Activated naive CD4-positive, alpha-beta T cell treated with anti-CD3 and anti-CD28 coated beads for 36 hours (primary cell): ENCODE measurements at regions of chr12 and their contacts with region 1.

Region 1: DNA sequence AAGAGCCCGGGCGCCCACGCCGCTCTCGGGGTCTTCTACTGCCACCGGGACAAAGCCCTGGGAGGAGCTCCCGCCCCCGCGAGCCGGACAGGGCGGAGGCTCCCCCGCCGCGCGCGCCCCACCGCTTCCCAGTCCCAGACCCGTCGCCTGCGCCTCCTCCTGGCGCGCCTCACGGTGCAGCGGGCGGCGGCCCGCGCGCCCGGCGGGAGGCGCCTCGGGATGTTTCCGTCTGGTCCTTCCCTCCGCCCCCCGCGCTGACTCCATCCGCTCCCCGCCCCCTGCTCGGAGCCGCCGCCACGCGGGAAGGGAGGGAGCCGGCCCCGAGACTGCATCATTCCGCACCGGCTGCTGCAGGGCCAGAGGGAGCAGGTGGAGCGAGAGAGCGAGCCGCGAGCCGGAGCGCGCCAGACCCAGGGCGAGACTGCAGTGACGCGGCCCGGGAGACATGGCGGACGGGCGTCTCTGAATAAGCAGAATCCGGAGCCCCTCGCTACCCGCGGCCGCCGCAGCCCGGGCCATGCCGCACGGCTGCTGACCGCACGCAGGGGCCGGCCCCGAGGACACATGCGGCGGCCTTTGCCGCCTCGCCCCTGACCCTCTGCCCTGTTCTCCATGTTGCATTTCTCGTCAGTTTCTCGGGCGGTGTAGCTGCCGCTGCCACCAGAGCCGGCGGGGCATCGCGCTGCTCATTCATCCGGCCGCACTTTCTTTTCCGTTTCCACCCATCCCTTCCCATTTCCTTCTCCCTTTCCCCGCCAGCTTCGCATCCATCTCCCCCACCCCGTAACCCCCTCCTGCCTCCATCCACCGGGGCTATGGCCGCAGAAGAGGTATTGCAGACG is at the start of gene BICD1:
- DNase-seq: peak; percentile 85
- H3K4me3 Mint-ChIP-seq: peak within 1 kb of the TSS; percentile 90
- H3K27ac Mint-ChIP-seq: peak within 1 kb of the TSS; percentile 84
- H3K4me1 Mint-ChIP-seq: peaks cover 18% of the 10 kb centered on the region
- H3K27me3 Mint-ChIP-seq: no peaks in the 10 kb centered on the region
- total RNA-seq, gene BICD1: 14.4 to 16.4 TPM

Region 2: GRCh38 chr12:31659087-31659933 is 447.4 kb before region 1 on chr12 and contains the start of gene ETFBKMT:
- CTCF ChIA-PET with region 1: no interaction called
- intact Hi-C with region 1: loop called (anchors 1 kb)
- DNase-seq: peak; percentile 96
- H3K4me3 Mint-ChIP-seq: peak within 1 kb of the TSS; percentile 94
- H3K27ac Mint-ChIP-seq: peak within 1 kb of the TSS; percentile 98
- H3K4me1 Mint-ChIP-seq: peaks cover 11% of the 10 kb centered on the region
- H3K27me3 Mint-ChIP-seq: no peaks in the 10 kb centered on the region
- total RNA-seq, gene ETFBKMT: 0.91 to 1.2 TPM

Region 3: GRCh38 chr12:31804185-31804504 is 302.6 kb before region 1 on chr12:
- CTCF ChIA-PET with region 1: interaction called, 5 read pairs
- intact Hi-C with region 1: loop called (anchors 5 kb)
- DNase-seq: no peak
- H3K4me3 Mint-ChIP-seq: peak overlapping the region; percentile 78
- H3K27ac Mint-ChIP-seq: peak overlapping the region; percentile 87
- H3K4me1 Mint-ChIP-seq: peaks cover 51% of the 10 kb centered on the region
- H3K27me3 Mint-ChIP-seq: no peaks in the 10 kb centered on the region

Region 4: GRCh38 chr12:31989571-31990362 is 117.0 kb before region 1 on chr12:
- CTCF ChIA-PET with region 1: no interaction called
- intact Hi-C with region 1: loop called (anchors 5 kb)
- DNase-seq: no peak
- H3K4me3 Mint-ChIP-seq: no peak overlapping the region
- H3K27ac Mint-ChIP-seq: peak overlapping the region; percentile 87
- H3K4me1 Mint-ChIP-seq: peaks cover 55% of the 10 kb centered on the region
- H3K27me3 Mint-ChIP-seq: no peaks in the 10 kb centered on the region

Region 5: DNA sequence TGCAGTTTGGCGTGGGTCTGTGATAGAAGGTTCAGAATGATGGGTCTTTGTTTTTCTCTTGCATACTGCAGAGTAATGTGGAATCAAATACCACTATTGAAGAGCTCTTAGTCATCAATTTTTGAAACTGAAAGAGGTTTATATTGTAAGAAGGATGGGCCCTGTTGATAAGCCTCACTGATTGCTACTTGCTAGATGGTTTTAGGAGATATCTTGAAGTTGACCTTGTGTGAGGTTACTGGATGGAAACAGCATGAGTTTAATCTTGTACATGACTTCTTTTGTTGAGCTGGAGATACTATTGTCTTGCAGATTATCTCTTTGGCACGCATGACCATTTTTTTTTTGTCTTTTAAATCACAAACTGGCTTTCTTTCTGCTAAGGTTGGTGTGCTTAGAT is 13.7 kb after region 1 on chr12:
- CTCF ChIA-PET with region 1: no interaction called
- intact Hi-C with region 1: loop called (anchors 2 kb)
- DNase-seq: no peak
- H3K4me3 Mint-ChIP-seq: no peak overlapping the region
- H3K27ac Mint-ChIP-seq: no peak overlapping the region
- H3K4me1 Mint-ChIP-seq: peaks cover 7% of the 10 kb centered on the region
- H3K27me3 Mint-ChIP-seq: no peaks in the 10 kb centered on the region

Region 6: GRCh38 chr12:32211066-32211899 is 104.5 kb after region 1 on chr12:
- CTCF ChIA-PET with region 1: no interaction called
- intact Hi-C with region 1: no loop called
- DNase-seq: no peak
- H3K4me3 Mint-ChIP-seq: no peak overlapping the region
- H3K27ac Mint-ChIP-seq: no peak overlapping the region
- H3K4me1 Mint-ChIP-seq: peaks cover 2% of the 10 kb centered on the region
- H3K27me3 Mint-ChIP-seq: no peaks in the 10 kb centered on the region

Region 7: DNA sequence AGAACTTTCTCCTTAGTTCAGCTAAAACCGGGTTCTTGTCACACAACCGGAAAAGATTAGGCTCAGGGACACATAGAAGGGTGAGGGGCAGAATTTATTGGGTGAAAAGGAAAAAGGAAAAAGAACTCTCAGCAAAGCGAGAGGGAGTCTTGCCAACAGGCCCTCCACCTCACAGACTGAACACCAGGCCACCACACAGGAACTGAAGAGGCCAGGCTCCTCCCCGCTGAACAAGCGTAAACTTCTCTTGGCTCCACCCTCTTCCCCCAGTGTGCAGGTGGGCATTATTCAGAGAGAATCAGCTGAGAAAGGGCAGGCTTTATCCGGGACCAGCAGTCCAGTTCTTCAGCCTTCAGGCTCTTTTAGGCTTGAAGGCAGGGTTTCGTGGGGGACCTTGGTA is 167.0 kb after region 1 on chr12:
- CTCF ChIA-PET with region 1: no interaction called
- intact Hi-C with region 1: loop called (anchors 2 kb)
- DNase-seq: peak; percentile 70
- H3K4me3 Mint-ChIP-seq: peak overlapping the region; percentile 58
- H3K27ac Mint-ChIP-seq: peak overlapping the region; percentile 91
- H3K4me1 Mint-ChIP-seq: peaks cover 19% of the 10 kb centered on the region
- H3K27me3 Mint-ChIP-seq: no peaks in the 10 kb centered on the region